ENCODE measurements at regions of chr10 and their contacts with region 1.

Region 1: DNA sequence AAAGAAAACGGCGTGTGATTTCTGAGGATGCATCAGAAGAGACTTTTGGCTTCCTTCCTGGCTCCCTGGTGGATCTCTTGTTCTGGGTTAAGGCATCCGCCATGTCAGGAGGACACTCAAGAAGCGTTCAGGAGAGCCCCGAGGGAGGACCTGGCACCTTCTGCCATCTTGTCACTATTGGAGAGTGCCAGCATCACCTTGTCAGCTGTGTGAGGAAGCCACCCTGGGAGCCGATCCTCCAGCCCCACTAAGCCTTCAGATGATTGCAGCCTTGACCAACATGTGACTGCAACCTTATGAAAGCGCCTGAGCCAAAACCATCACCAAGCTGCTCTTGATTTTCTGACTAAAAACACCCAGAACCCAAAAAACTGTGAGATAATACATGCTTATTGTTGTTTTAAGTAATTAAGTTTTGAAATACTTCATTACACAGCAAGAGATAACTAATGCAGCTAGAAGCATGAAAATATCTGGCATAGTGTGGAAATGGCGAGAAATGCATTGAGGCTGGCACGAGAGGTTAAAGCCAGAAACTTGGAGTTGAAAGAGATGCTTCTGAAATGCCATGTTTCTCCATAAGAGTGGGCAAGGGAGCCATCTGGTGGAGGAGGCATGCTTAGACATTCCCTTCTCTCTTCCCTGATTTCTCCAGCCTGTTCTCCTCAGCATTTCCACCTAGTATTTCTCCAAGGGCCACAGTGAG is 5.4 kb upstream of the ZFYVE27 start:
- DNase-seq: no peak
- H3K4me3 ChIP-seq: no peak overlapping the region
- H3K27ac ChIP-seq: peak overlapping the region in 1 of 4 donors; percentile 0
- H3K4me1 ChIP-seq: peaks cover under 1 to 27% (median 21%) of the 10 kb centered on the region in 4 donors
- H3K27me3 ChIP-seq: no peaks in the 10 kb centered on the region
- CTCF ChIP-seq: peak; percentile 86 to 94 (median 88)
- EP300 ChIP-seq: no peak
- POLR2A ChIP-seq: no peak

Region 2: GRCh38 chr10:97584060-97584797 is 147.3 kb before region 1 on chr10 and contains the start of gene HOGA1:
- intact Hi-C with region 1: no loop called
- DNase-seq: no peak
- H3K4me3 ChIP-seq: no peak within 1 kb of the TSS
- H3K27ac ChIP-seq: peak within 1 kb of the TSS in 1 of 4 donors; percentile 39
- H3K4me1 ChIP-seq: peaks cover 4 to 10% (median 6%) of the 10 kb centered on the region in 4 donors
- H3K27me3 ChIP-seq: no peaks in the 10 kb centered on the region
- CTCF ChIP-seq: no peak
- EP300 ChIP-seq: no peak
- POLR2A ChIP-seq: no peak
- total RNA-seq, gene HOGA1: 0.45 to 1.5 (median 0.83) TPM

Region 3: DNA sequence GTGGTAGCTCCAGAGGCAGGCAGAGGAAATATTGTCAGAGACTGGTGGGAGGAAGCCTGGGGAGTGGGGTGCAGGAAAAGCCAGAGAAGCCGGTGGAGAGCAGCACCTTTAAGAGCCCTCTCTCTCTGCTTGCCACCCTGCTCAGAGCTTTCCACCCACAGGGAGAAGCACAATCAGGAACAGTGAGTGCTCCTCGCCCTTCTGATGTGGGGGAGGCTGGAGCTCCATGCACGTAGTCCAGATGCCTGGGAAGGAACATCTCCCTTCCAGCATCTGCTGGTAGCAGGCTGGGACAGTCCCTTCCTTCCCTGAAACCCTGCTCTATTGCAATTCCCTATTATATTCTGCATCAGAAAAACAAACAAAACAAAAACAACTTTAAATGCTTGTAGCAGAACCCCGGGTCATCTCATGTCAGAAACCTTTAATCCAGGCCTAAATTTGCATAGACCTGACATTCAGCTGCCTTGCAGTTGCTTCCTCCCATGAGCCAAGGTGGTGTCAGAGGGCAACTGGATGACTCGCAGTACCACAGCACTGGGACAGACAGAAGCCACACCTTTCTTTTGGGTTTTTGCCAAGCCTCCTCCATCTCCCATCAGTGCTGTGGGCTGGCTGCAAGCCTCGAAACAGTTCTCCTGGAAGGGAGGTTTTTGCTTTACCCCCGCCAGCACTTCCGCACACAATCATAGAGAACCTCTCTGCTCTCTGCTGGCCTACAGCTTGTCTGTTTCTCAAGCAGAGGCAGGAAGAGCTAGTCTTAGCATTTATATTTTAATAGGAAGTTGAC is 57.6 kb before region 1 on chr10:
- intact Hi-C with region 1: loop called (anchors 2 kb)
- DNase-seq: no peak
- H3K4me3 ChIP-seq: no peak overlapping the region
- H3K27ac ChIP-seq: no peak overlapping the region
- H3K4me1 ChIP-seq: peaks cover 0 to 21% (median 11%) of the 10 kb centered on the region in 4 donors
- H3K27me3 ChIP-seq: no peaks in the 10 kb centered on the region
- CTCF ChIP-seq: no peak
- EP300 ChIP-seq: no peak
- POLR2A ChIP-seq: no peak

Region 4: DNA sequence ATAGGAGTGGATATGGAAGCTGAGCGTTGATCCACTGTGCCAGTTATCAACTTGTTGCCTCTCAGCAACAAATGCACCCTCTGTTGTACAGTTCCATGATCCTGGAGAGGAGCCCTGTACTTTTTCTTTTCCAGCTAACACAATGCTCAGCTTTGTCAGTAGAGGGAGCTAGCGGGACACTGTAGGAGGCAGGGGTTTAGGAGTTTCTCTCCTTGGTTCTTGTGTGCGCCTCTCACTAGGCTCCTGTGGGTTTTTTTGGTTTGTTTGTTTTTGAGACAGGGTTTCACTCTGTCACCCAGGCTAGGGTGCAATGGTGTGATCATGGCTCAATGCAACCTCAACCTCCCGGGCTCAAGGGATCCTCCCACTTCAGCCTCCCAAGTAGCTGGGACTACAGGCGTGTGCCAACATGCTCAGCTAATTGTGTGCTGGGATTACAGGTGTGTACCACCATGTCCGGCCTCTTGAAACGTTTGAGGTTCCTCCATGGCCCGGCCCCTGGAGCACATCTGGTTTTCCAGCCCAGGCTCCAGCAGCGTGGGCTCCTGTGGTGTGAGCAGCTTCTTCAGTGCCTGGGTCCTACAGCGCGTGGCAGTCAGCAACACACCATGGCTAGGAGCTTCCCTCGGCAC is 29.9 kb before region 1 on chr10:
- intact Hi-C with region 1: loop called (anchors 5 kb)
- DNase-seq: no peak
- H3K4me3 ChIP-seq: no peak overlapping the region
- H3K27ac ChIP-seq: no peak overlapping the region
- H3K4me1 ChIP-seq: peaks cover 0 to 12% (median 9%) of the 10 kb centered on the region in 4 donors
- H3K27me3 ChIP-seq: no peaks in the 10 kb centered on the region
- CTCF ChIP-seq: peak; percentile 79 to 97 (median 92)
- EP300 ChIP-seq: no peak
- POLR2A ChIP-seq: no peak

Region 5: DNA sequence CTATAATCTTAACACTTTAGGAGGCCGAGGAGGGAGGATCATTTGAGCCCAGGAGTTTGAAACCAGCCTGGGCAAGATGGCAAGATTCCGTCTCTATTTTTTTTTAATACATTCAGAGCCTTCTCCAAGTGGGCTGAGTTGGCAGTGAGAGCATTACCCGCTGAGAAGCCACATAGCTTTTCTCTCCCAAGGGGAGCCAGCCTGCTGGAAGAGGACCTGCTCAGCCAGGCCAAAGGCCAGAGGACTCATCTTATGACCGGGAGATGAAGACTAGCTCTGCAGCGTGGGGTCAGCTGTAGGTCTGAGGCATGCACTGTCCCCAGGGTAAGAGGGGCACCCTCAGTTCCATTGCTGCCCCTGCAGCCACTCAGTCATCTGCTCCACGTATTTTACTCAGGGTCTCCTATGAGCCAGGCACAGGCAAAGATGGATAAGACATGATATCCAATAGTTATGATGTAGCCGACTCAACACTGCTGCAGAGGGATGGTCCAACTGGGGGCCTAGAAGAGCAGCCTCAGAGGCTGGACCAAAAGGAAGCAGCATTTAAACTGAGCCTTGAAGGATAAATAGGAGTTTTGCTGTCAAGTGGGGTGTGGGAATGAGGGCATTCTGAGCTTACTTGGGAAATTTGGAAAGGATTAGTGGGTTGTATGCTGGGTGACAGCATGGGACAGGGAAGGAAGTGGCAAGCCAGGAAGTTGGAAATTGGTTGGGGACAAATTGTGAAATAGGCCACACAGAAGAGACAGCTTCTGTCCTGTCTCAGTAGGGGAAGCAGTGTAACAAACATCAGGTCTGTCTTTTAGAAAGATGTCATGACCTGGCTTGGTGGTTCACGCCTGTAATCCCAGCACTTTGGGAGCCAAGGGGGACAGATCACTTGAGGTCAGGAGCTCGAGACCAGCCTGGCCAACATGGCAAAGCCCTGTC is 19.6 kb before region 1 on chr10:
- intact Hi-C with region 1: loop called (anchors 2 kb)
- DNase-seq: peak; percentile 90
- H3K4me3 ChIP-seq: no peak overlapping the region
- H3K27ac ChIP-seq: peak overlapping the region; percentile 99 to 100 (median 100)
- H3K4me1 ChIP-seq: peaks cover 47 to 82% (median 79%) of the 10 kb centered on the region in 4 donors
- H3K27me3 ChIP-seq: no peaks in the 10 kb centered on the region
- CTCF ChIP-seq: no peak
- EP300 ChIP-seq: no peak
- POLR2A ChIP-seq: no peak